ENCODE measurements at regions of chr3 and their contacts with region 1.

Region 1: GRCh38 chr3:128497387-128498126 is 4.6 kb upstream of the GATA2 start:
- DNase-seq: peak; percentile 52
- H3K4me3 ChIP-seq: peak overlapping the region in 2 of 3 experiments; percentile 16 to 33
- H3K27ac ChIP-seq: no peak overlapping the region
- H3K4me1 ChIP-seq: peaks cover 13% of the 10 kb centered on the region
- H3K27me3 ChIP-seq: no peaks in the 10 kb centered on the region
- CTCF ChIP-seq: peak; percentile 65 to 81
- POLR2A ChIP-seq: no peak

Region 2: DNA sequence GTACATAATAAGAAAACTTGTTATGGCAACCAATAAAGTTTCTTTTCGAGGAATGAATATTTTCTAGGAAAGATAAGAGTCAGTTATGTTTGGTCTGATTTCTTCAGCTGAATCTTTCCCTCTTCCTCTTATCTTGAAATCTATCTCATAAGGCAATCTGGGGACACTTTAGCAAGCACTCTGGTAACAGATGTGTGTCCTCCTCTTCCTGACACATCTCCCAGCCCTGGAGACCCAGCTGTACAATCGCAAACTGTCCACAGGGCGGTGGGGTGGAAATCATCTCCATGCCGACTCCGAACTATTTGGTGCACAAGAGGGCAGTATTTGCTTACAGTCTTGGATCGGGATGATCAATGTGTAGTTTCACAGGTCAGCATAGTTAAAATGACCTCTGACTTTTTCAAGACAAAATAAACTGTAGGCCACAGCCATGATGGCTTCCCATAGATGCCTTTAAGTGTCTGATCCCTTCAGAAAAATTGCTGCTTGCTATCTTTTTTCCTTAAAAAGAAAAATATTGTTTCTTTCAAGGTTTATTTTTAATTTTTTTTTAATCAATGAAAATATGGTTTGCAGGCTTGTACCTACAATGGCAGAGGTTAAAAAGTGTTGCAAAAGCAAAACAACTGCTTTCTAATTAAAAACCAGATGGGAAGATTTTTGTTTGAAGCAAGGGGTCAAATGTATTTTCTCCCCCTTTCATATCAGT is 326.6 kb before region 1 on chr3:
- CTCF ChIA-PET with region 1: interaction called, 4 read pairs
- POLR2A ChIA-PET with region 1: no interaction called
- dilution Hi-C with region 1: no loop called
- intact Hi-C with region 1: loop called (anchors 1 kb)
- DNase-seq: peak; percentile 78
- H3K4me3 ChIP-seq: no peak overlapping the region
- H3K27ac ChIP-seq: no peak overlapping the region
- H3K4me1 ChIP-seq: no peaks in the 10 kb centered on the region
- H3K27me3 ChIP-seq: no peaks in the 10 kb centered on the region
- CTCF ChIP-seq: peak; percentile 73 to 83
- POLR2A ChIP-seq: no peak

Region 3: DNA sequence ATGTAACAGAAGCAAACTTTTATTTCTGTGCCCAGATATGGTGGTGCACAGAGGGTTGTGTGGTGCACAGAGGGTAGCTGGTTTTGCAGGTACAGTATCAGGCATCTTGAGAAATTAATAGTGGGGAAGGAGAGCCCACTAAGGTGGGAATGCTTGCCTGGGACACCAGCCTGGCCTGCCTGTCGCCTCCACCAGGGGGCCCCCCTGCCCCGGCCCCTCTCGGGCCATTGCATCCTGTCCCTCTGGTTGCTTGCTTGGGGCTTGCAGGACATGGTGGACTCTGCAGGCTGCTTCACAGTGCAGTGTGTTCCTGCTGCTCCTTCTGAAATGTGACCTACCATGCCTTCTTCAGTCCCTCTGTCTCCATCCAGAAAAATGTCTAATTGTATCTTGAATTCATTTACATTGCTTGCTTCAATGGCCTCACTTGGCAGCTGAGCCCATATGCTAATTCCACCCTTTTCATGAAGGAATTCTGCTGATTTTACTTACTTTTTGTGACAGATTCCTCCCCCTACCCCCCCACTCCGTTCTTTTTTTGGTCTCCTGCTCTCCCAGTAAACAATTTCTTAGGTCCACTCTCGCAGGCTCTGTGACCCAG is 270.7 kb before region 1 on chr3:
- CTCF ChIA-PET with region 1: interaction called, 3 read pairs
- POLR2A ChIA-PET with region 1: no interaction called
- dilution Hi-C with region 1: no loop called
- intact Hi-C with region 1: loop called (anchors 5 kb)
- DNase-seq: peak; percentile 59
- H3K4me3 ChIP-seq: no peak overlapping the region
- H3K27ac ChIP-seq: no peak overlapping the region
- H3K4me1 ChIP-seq: no peaks in the 10 kb centered on the region
- H3K27me3 ChIP-seq: no peaks in the 10 kb centered on the region
- CTCF ChIP-seq: peak; percentile 89 to 98
- POLR2A ChIP-seq: no peak

Region 4: DNA sequence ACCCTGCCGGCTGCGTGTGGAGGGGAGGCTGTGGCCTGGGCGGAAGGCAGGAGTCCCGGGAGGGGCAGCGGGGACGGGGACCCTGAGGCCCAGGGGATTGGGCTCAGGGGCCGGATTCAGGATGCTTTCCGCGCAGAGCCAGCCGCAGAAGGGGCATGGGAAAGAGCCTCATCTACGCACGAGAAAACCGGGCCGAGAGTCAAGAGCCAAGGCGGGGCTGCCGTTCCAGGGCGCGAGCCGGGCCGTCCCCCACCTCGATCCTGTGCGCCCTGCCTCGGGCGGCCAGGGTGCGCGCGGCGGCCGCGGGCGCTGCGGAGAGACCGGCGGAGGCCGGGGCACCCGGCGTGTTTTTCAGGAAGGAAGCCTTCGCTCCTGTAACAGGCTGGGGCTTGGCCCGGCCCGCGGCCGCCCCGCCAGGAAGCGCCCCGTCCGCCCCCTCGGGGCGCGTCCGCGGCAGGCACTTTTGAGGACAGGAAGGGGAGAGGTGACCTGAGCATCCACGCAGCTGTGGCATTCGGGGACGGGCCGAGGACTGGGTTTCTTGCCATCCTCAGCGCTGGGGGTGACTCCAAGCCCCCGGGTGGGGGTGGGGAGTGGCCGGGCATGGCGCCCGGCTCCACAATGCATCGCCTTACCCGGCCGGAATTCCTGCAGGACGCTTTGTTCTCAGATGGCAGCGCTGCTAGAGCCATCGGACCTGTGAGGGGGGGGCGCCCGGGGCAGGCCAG is 57.7 kb after region 1 on chr3:
- CTCF ChIA-PET with region 1: interaction called, 12 read pairs
- POLR2A ChIA-PET with region 1: no interaction called
- dilution Hi-C with region 1: no loop called
- intact Hi-C with region 1: no loop called
- DNase-seq: peak; percentile 86
- H3K4me3 ChIP-seq: no peak overlapping the region
- H3K27ac ChIP-seq: peak overlapping the region; percentile 75
- H3K4me1 ChIP-seq: peaks cover 40% of the 10 kb centered on the region
- H3K27me3 ChIP-seq: no peaks in the 10 kb centered on the region
- CTCF ChIP-seq: no peak
- POLR2A ChIP-seq: peak; percentile 35

Region 5: DNA sequence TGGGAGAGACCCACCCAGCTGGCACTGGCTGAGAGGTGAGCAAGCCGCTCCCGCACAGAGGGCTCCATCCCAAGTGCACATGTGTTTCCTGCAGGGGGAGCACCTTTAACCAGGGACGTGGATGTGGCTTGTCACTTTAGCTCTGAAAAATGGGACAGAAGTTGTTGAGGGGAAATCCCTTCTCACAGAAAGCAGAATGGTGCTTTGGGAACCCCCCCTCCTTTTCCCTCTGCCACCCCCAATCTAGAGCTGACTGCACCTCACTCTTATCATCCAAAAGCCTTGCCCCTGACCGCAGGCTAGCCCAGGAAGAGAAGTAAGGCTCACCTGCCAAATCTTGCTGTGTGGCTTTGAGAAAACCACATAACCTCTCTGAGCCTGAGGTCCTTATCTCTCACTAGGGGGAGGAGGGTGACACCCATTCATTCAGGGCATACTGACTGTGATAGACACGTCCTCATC is 75.1 kb after region 1 on chr3:
- CTCF ChIA-PET with region 1: interaction called, 10 read pairs
- POLR2A ChIA-PET with region 1: no interaction called
- dilution Hi-C with region 1: no loop called
- intact Hi-C with region 1: no loop called
- DNase-seq: no peak
- H3K4me3 ChIP-seq: no peak overlapping the region
- H3K27ac ChIP-seq: no peak overlapping the region
- H3K4me1 ChIP-seq: peaks cover 22% of the 10 kb centered on the region
- H3K27me3 ChIP-seq: peaks cover 16 to 50% of the 10 kb centered on the region in 2 experiments
- CTCF ChIP-seq: peak; percentile 23 to 24
- POLR2A ChIP-seq: no peak

Region 6: GRCh38 chr3:129160891-129161859 is 663.6 kb after region 1 on chr3 and contains the start of gene ISY1:
- CTCF ChIA-PET with region 1: no interaction called
- POLR2A ChIA-PET with region 1: no interaction called
- dilution Hi-C with region 1: no loop called
- intact Hi-C with region 1: no loop called
- DNase-seq: peak; percentile 95
- H3K4me3 ChIP-seq: peak within 1 kb of the TSS; percentile 82 to 100 (median 99)
- H3K27ac ChIP-seq: peak within 1 kb of the TSS; percentile 86
- H3K4me1 ChIP-seq: peaks cover 19% of the 10 kb centered on the region
- H3K27me3 ChIP-seq: no peaks in the 10 kb centered on the region
- CTCF ChIP-seq: peak; percentile 88 to 93
- POLR2A ChIP-seq: peak; percentile 99
- total RNA-seq, gene ISY1: 50.6 and 59.4 TPM in 2 replicates